ENCODE measurements at regions of chr19 and their contacts with region 1.

Region 1: DNA sequence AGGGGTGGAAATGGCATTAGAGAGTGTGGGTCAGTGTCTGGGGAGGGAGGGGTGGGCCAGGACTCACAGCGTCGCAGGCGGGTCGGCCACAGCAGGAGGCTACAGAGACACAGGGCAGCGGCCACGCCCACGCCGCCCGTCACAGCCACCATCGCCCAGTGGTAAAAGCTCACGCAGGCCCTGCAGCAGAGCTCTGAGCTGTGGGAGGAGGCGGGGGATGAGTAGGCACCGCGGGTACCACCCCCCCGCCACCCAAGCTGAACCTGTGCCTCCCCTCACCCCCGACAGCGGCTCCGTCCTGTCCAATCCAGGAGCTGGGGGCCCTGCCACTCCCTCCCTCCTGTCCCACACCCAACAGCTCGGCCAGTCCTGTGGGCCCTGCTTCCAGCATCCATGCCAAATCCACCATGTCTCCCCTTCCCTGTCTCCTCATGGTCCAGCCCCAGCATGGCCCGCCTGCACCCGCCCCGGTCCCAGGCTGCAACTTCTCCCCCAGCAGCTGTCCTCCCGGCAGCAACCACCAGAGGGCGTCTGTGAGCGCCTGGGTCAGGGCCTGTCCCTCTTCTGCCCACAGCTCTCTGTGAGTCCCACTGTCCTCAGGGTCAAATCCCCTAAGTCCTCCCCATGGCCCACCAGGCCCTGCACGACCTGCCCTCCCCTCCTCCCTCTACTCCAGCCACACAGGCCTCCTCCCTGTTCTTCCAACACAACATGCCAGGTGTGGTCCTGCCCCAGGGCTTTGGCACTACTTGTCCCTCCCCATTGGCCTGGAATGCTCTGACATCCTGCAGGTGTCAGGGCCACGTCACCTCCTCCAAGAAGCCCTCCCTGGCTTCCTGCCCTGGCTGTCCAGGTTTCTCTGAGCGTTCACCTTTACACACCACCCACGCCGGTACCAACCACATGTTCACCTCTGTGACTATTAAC is 6.0 kb downstream of the TEKTIP1 start:
- DNase-seq: peak in 1 of 2 experiments; percentile 100
- H3K4me3 ChIP-seq: no peak overlapping the region
- H3K27ac ChIP-seq: no peak overlapping the region
- H3K4me1 ChIP-seq: no peaks in the 10 kb centered on the region
- H3K27me3 ChIP-seq: no peaks in the 10 kb centered on the region
- CTCF ChIP-seq: peak; percentile 92 to 96 (median 95)
- EP300 ChIP-seq: no peak
- POLR2A ChIP-seq: peak in 1 of 2 experiments; percentile 50; a peak in 1 of 3 replicates
- RAD21 ChIP-seq: peak; percentile 63 to 75

Region 2: DNA sequence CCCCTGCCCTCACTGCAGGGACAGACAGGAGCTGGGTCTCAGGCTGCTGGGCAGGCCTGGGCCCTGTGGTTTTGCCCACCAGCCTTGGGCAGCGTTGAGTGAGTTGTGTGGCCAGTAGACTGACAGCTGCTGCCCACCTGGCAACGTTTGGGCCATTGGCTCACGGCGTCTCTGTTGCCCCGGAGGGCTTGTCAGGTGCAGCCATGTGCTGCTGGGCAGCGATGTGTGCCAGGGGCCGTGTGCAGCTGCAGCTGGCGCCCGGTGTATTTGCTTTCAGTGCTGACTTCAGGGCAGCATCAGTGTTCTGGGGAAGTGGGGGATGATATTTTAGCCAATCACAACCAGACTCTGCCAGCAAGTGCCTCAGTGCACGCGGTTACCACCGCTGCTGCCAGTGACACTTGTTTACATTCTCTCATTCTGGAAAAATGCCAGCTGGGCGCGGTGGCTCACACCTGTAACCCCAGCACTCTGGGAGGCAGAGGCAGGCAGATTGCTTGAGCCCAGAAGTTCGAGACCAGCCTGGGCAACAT is 28.3 kb before region 1 on chr19:
- CTCF ChIA-PET with region 1: interaction called, 28 read pairs
- POLR2A ChIA-PET with region 1: no interaction called
- DNase-seq: no peak
- H3K4me3 ChIP-seq: no peak overlapping the region
- H3K27ac ChIP-seq: no peak overlapping the region
- H3K4me1 ChIP-seq: peaks cover 0 to 29% (median 20%) of the 10 kb centered on the region in 4 experiments; a peak in 6 of 7 replicates
- H3K27me3 ChIP-seq: no peaks in the 10 kb centered on the region
- CTCF ChIP-seq: no peak
- EP300 ChIP-seq: no peak
- POLR2A ChIP-seq: no peak
- RAD21 ChIP-seq: no peak

Region 3: GRCh38 chr19:3557461-3558248 is 12.7 kb after region 1 on chr19 and contains the start of gene MFSD12:
- CTCF ChIA-PET with region 1: interaction called, 66 read pairs
- POLR2A ChIA-PET with region 1: interaction called, 12 read pairs
- DNase-seq: peak; percentile 68 to 96
- H3K4me3 ChIP-seq: peak within 1 kb of the TSS; percentile 67 to 76 (median 72)
- H3K27ac ChIP-seq: no peak within 1 kb of the TSS
- H3K4me1 ChIP-seq: peaks cover 0 to 8% (median 6%) of the 10 kb centered on the region in 4 experiments; a peak in 5 of 7 replicates
- H3K27me3 ChIP-seq: peaks cover 0 to 15% (median 7%) of the 10 kb centered on the region in 4 experiments; a peak in 4 of 7 replicates
- CTCF ChIP-seq: 0 out of 4 replicates have a peak, but pooled peaks of 1 of the 3 experiments have one; percentile 1
- EP300 ChIP-seq: no peak; a peak in 1 of 3 replicates
- POLR2A ChIP-seq: 0 out of 3 replicates have a peak, but pooled peaks of 1 of the 2 experiments have one; percentile 12
- RAD21 ChIP-seq: no peak
- total RNA-seq, gene MFSD12: 59.6 and 62.5 TPM in 2 replicates

Region 4: GRCh38 chr19:3566125-3566524 is 21.1 kb after region 1 on chr19:
- CTCF ChIA-PET with region 1: interaction called, 66 read pairs
- POLR2A ChIA-PET with region 1: interaction called, 11 read pairs
- DNase-seq: no peak
- H3K4me3 ChIP-seq: no peak overlapping the region
- H3K27ac ChIP-seq: no peak overlapping the region
- H3K4me1 ChIP-seq: no peaks in the 10 kb centered on the region
- H3K27me3 ChIP-seq: peaks cover 0 to 3% (median 0%) of the 10 kb centered on the region in 4 experiments; a peak in 1 of 7 replicates
- CTCF ChIP-seq: no peak
- EP300 ChIP-seq: no peak
- POLR2A ChIP-seq: no peak
- RAD21 ChIP-seq: no peak

Region 5: GRCh38 chr19:3573884-3574637 is 29.1 kb after region 1 on chr19:
- CTCF ChIA-PET with region 1: interaction called, 51 read pairs
- POLR2A ChIA-PET with region 1: interaction called, 3 read pairs
- DNase-seq: peak; percentile 97 to 100
- H3K4me3 ChIP-seq: peak overlapping the region; percentile 66 to 97 (median 82)
- H3K27ac ChIP-seq: no peak overlapping the region
- H3K4me1 ChIP-seq: peaks cover 3 to 17% (median 12%) of the 10 kb centered on the region in 4 experiments; a peak in 6 of 7 replicates
- H3K27me3 ChIP-seq: peaks cover 0 to 3% (median 0%) of the 10 kb centered on the region in 4 experiments; a peak in 1 of 7 replicates
- CTCF ChIP-seq: no peak
- EP300 ChIP-seq: no peak
- POLR2A ChIP-seq: no peak
- RAD21 ChIP-seq: no peak

Region 6: GRCh38 chr19:3593156-3593555 is 48.2 kb after region 1 on chr19:
- CTCF ChIA-PET with region 1: interaction called, 17 read pairs
- POLR2A ChIA-PET with region 1: interaction called, 3 read pairs
- DNase-seq: peak in 1 of 2 experiments; percentile 63
- H3K4me3 ChIP-seq: no peak overlapping the region
- H3K27ac ChIP-seq: no peak overlapping the region
- H3K4me1 ChIP-seq: no peaks in the 10 kb centered on the region
- H3K27me3 ChIP-seq: peaks cover 0 to 2% (median 0%) of the 10 kb centered on the region in 4 experiments; a peak in 2 of 7 replicates
- CTCF ChIP-seq: peak; percentile 73 to 77 (median 75)
- EP300 ChIP-seq: no peak
- POLR2A ChIP-seq: no peak
- RAD21 ChIP-seq: peak; percentile 50 to 66

Region 7: DNA sequence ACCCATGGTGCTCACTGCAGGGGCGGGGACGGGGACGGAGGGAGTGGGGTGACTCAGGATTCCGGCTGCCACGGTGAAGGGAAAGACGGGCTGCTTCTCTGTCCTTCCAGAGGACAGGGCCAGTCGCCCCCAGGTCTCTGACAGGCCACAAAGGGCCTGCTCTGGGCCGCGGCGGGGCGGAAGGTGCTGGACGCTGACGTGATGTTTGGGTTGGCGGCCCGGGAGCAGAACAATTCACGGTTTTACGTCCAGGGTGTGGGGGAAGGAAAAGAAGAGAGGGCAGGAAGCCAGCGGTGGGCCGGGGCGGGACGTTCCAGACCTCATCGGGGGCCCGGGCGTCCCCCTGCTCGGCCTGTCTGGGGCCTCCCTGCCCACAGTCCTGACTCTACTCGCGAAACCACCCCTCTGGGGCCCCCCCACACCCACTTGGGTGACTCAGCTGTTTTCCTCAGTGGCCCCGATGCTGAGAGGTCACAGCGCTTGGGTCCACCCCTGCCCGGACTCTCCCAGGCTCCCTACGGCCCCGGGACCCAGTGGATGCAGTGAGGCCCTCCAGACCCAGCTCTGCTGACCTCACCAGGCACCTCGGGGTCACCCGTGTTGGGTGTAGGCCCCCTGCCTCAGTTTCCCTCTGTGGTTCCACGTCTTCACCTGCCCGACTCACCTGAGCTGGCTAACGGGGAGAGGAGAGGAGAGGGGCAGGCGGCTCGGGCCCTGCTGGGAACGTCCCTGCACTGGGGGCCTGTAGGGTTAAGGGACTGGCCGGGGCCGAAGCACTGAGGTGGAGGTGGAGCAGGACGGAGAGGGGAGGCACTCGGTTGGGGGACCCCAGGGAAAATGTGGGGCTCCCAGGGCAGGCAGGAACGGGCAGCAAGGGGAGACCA is 126.0 kb after region 1 on chr19:
- CTCF ChIA-PET with region 1: no interaction called
- POLR2A ChIA-PET with region 1: no interaction called
- DNase-seq: no peak
- H3K4me3 ChIP-seq: no peak overlapping the region
- H3K27ac ChIP-seq: no peak overlapping the region; the same call in 1 of the 2 replicates
- H3K4me1 ChIP-seq: peaks cover 0 to 21% (median 10%) of the 10 kb centered on the region in 4 experiments; a peak in 5 of 7 replicates
- H3K27me3 ChIP-seq: no peaks in the 10 kb centered on the region
- CTCF ChIP-seq: no peak
- EP300 ChIP-seq: no peak
- POLR2A ChIP-seq: no peak
- RAD21 ChIP-seq: no peak